ENCODE measurements at regions of chr4 and their contacts with region 1.

Region 1: DNA sequence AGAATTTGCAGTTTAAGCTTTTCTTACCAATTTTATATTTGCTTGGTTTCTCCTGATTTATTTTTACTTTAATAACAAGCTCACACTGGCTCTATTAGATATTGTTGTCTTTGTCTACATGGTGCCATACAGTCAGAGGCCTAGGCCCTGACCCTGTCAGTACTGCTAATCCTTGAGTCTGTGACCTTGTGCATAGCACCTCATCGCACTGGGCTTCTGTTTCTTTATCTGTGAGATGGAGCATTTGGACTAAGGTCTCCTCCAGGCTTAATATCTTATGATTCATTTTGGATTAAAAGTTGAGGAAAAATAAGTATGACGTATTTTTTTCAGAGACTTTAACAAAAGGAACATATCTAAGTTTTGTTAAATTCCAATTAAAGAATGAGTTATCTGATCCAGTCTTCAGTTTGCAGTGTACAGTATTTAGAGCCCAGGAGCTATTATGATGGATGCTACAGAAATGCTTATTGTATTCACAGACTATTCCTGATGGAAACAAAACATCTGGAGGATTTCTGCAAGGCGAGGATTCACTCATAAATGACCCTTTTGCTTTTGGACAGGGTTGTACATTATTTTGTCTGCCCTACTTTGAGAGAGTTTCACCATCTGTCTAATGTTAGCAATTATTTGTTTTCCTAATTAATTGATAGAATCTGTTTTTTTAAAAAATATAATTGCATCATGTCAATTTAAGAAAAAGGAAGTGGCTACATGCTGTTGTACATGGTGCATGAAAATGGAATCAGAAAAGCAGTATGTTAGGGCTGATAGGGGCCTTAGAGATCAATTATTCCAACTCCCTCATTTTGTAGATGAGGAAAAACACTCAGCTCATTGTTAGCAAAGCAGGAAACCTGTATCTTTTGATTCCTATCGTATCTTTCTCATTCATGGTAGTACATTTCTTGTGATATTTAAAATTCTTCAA is 203.6 kb downstream of the BANK1 start:
- DNase-seq: no peak
- ATAC-seq: no peak
- H3K4me3 ChIP-seq: no peak overlapping the region
- H3K27ac ChIP-seq: no peak overlapping the region
- H3K4me1 ChIP-seq: no peaks in the 10 kb centered on the region
- H3K27me3 ChIP-seq: no peaks in the 10 kb centered on the region
- CTCF ChIP-seq: no peak
- EP300 ChIP-seq: no peak
- POLR2A ChIP-seq: no peak
- RAD21 ChIP-seq: no peak

Region 2: GRCh38 chr4:102022343-102022742 is 28.2 kb after region 1 on chr4:
- CTCF ChIA-PET with region 1: no interaction called
- POLR2A ChIA-PET with region 1: no interaction called
- in situ Hi-C with region 1: no loop called
- intact Hi-C with region 1: loop called (anchors 1 kb)
- DNase-seq: no peak
- ATAC-seq: no peak
- H3K4me3 ChIP-seq: no peak overlapping the region
- H3K27ac ChIP-seq: no peak overlapping the region
- H3K4me1 ChIP-seq: no peaks in the 10 kb centered on the region
- H3K27me3 ChIP-seq: no peaks in the 10 kb centered on the region
- CTCF ChIP-seq: no peak
- EP300 ChIP-seq: no peak
- POLR2A ChIP-seq: no peak
- RAD21 ChIP-seq: no peak

Region 3: DNA sequence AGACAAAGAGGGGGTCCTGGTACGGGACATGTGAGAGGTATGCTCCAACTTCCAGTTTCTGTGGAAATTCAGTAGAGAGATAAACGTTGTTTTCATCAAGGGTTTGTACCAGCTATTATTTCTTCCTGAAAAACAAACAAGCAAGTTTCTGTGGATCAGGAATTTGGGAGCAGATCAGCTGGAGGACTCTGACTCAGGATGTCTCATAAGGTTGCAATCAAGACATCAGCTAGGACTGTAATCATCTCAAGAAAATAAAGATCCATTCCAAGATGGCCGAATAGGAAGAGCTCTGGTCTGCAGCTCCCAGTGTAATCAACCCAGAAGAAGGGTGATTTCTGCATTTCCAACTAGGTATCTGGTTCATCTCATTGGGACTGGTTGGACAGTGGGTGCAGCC is 483.5 kb after region 1 on chr4:
- CTCF ChIA-PET with region 1: no interaction called
- POLR2A ChIA-PET with region 1: no interaction called
- in situ Hi-C with region 1: no loop called
- intact Hi-C with region 1: no loop called
- DNase-seq: no peak
- ATAC-seq: no peak
- H3K4me3 ChIP-seq: peak overlapping the region in 1 of 3 experiments; percentile 59; a peak in 2 of 6 replicates
- H3K27ac ChIP-seq: no peak overlapping the region
- H3K4me1 ChIP-seq: peaks cover 29% of the 10 kb centered on the region
- H3K27me3 ChIP-seq: no peaks in the 10 kb centered on the region
- CTCF ChIP-seq: no peak
- EP300 ChIP-seq: no peak
- POLR2A ChIP-seq: no peak
- RAD21 ChIP-seq: no peak

Measured in HepG2 (cell line).